ENCODE measurements at regions of chr4 and their contacts with region 1.

Region 1: DNA sequence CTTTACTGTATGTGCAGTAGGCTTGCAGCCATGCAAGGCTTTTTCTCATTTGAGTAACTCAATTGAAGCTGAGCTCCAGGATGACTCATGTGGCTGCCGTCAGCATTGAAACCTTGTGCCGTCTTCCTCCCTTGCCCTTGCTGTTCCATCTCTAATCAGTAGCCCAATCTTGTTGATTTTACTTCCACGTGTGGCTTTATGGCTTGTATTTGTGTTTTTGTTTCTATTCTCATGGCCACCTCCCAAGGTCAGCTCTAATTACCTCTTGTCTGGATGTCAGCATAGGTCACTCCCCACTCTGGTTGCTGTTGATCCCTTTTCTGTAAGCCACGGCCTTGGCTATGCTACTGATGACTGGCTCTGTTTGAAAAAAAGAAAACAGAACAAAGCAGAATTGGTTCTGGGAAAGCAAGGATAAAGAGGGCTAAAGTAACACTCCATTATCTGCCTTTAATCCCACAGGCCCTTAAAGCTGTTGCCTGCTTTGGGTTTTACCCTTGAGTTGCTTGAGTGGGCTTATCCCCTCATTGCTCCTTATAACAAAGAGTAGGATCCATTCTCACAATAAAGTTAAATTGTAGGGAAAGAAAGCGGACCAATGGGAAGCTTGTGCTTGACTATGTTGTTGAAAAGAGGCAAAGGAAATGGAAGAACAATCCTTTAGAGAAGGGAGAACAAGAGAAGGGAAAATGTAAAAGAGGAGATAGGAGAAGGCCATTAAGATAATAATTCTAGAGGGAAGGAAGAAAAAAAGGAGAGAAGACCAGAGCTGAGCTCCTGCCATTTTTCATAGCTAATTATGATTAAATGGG is 173.9 kb upstream of the PGRMC2 start:
- DNase-seq: no peak
- H3K4me3 ChIP-seq: no peak overlapping the region
- H3K27ac ChIP-seq: peak overlapping the region; percentile 35
- H3K4me1 ChIP-seq: peaks cover 10% of the 10 kb centered on the region
- H3K27me3 ChIP-seq: no peaks in the 10 kb centered on the region
- CTCF ChIP-seq: no peak
- POLR2A ChIP-seq: no peak

Region 2: DNA sequence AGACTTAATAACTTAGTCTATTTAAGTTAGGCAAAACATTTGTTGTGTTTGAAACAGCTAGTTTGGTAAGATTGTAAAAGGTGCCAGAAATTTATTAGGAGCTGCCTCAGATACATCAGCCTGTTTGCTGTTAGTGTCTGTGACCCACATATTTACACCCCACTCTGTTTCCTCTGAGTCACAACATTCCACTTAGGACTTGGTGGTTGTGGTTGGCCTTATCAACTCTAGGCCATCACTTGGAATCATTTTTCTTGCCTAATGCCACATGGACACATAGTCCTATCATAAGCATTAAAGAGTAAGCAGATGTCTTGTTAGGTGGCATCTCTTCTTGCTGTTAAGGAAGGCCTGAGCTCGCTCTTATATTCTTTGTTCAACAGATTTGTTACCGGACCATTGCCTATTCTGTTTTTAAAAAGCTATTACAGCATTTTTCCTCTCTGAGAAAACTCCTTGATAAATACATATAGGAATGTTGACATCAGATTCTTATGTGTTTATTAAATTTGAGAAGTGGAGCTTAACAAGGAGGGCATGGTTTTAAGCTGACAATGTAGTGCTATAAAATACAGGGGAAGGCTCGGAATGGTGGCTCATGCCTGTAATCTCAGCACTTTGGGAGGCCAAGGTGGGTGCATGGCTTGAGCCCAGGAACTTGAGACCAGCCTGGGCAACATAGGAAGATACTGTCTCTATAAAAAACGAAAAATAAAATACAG is 122.7 kb before region 1 on chr4:
- intact Hi-C with region 1: no loop called
- DNase-seq: no peak
- H3K4me3 ChIP-seq: no peak overlapping the region
- H3K27ac ChIP-seq: no peak overlapping the region
- H3K4me1 ChIP-seq: no peaks in the 10 kb centered on the region
- H3K27me3 ChIP-seq: no peaks in the 10 kb centered on the region
- CTCF ChIP-seq: no peak
- POLR2A ChIP-seq: no peak

Region 3: DNA sequence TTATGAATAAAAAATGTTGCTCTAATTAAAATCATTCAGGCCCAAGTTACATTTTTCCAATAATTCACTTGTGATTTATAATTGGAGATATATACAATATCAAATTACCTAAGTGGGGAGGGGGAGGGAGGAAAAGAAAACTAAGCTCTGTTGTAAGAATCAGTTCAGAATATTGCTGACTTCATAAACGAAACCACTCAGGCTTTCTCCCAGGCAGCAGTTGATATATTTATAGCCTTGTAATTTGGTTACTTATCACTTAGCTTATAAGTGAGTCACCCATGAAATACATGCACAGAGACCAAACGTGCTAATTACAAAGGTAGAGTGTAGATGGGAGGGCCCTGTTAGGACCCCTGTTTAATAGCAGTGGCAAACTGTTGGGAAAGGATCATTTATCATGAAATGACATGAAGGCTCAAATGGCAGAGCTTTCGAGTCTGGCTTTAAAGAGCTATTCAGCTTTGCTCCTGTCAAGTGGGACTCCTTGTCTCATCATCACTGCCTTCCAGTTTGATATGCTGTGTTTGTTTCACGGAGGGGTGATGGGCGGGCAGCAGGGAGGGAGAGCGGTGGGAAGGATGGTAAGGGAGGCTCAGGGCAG is 68.3 kb before region 1 on chr4:
- intact Hi-C with region 1: no loop called
- DNase-seq: no peak
- H3K4me3 ChIP-seq: no peak overlapping the region
- H3K27ac ChIP-seq: peak overlapping the region; percentile 74
- H3K4me1 ChIP-seq: peaks cover 57% of the 10 kb centered on the region
- H3K27me3 ChIP-seq: no peaks in the 10 kb centered on the region
- CTCF ChIP-seq: no peak
- POLR2A ChIP-seq: no peak

Region 4: DNA sequence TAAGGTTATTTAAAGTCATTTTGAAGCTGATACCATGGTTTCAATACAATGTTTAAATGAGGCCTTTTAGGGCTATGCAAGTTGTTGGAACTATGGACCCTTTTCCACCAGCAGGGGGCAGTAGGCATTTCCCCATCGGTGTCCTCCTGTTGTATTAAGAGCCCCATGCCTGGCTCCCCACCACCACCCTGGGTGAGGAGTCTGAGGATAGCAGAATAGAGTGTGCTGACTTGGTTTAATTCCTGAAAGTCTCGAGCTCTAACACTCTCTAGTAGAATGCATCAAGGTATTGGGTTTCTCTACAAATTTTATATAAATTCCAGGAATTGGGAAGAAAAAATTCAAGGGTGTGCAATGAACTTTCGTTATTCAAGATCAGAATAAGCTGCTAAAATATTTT is 113.2 kb after region 1 on chr4:
- intact Hi-C with region 1: loop called (anchors 10 kb)
- DNase-seq: no peak
- H3K4me3 ChIP-seq: no peak overlapping the region
- H3K27ac ChIP-seq: no peak overlapping the region
- H3K4me1 ChIP-seq: peaks cover 16% of the 10 kb centered on the region
- H3K27me3 ChIP-seq: no peaks in the 10 kb centered on the region
- CTCF ChIP-seq: peak in 1 of 3 experiments; percentile 28
- POLR2A ChIP-seq: no peak

Region 5: DNA sequence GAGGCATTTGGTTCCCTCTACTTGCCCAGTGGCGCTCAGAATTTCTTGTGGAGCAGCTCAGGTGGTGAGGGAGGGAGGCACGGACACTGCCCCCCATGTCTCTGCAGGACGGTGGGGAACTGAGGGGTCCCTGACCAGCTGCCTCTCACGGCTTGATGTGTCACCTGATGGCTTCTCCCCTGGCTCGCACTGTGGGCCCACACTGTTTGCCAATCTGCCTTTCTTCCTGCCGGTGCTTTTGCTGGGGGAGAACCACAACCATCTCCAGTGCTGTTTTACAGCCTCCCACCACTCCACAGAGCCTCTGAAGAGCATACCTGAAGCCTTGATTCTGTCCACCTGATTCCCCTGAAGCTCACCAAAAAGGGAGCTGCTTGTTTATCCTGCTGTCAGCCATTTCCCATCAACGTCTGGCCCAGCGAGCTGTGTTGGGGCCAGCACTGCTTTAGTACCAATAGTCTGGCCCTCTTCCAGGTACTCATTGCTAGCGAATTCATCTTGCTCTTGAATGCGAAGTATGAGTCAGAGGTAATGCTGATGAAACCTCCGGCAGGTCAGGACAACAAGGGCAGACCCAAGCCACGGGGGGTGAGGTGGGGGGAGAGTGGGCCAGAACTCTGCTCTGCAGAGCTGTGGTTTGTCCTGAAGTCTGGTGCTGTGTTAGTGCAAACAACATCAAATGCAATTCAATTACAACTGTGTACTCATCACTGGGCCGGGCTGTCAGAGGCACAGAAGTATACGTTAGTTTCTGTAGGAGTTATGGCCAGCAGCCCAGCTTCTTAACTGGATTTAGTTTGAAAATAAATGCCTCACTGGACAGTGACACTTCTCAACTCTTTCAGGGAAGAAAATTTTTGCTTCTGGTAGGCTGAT is 139.7 kb after region 1 on chr4:
- intact Hi-C with region 1: no loop called
- DNase-seq: peak in 1 of 2 donors; percentile 93
- H3K4me3 ChIP-seq: no peak overlapping the region
- H3K27ac ChIP-seq: peak overlapping the region; percentile 41
- H3K4me1 ChIP-seq: peaks cover 35% of the 10 kb centered on the region
- H3K27me3 ChIP-seq: no peaks in the 10 kb centered on the region
- CTCF ChIP-seq: no peak
- POLR2A ChIP-seq: no peak

Measured in vagina (tissue), 2 donors.